Posterior cingulate gyrus (tissue), 11 donors: ENCODE measurements at regions of chr3 and their contacts with region 1.

Region 1: GRCh38 chr3:43690400-43691119 is at the start of gene ABHD5:
- DNase-seq: peak; percentile 77 to 98 (median 84)

Region 2: DNA sequence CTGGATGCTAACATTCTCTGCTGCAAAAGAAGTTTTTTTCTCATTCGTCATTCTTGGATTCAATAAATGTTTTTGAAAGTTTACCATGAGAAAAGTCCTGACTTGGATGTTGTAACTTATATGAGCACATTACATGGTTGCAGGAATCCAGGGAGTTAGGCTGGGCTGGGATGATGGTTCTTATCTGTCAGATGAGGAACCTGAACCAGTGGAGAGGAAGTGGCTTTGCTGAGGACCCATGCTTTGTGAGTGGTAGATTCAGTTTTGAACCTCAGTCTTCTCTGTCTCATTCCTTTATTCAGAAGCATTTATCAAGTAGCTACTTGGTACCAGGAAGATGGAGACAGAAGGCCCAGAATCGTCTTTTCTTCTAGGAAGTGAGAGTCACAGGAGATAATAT is 715.1 kb before region 1 on chr3:
- intact Hi-C with region 1: no loop called
- DNase-seq: no peak

Region 3: GRCh38 chr3:43432462-43432861 is 258.1 kb before region 1 on chr3:
- intact Hi-C with region 1: no loop called
- DNase-seq: no peak

Region 4: DNA sequence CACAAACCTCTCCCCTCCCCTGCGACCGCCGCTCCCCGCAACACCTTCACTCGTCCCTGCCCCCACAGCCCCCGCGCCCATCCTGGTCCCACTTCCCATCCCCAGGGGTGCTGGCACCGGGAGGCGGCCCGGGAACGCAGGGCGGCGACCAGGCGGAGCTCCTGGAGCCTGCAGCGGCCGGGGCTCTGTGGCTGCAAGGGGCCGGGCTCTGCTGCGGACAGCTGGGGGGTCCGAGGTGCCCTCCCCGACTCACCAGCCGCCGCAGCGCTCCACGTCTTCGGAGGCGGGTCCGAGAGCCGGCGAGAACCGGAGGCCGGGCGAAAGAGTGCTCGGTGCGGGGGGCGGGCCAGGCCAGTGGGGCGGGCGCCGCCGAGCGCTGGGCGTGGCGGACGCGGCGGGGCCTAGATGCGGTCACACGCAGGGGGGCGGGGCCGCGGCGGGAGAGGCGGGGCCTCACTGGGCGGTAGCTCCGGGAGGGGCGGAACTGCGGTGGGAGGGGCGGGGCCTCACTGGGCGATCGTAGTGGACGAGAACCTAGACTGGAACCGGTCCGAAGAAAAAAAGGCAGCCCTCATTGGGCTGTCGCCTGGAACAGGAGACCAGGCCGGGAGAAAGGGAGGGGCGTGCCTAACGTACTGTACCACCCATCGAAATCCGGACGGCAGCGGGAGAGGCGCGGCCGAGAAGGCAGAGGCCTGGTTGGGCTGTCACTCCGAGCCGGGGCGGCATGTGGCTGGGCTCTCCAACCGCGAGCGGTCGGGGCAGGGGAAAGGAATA is 68.7 kb before region 1 on chr3 and contains the start of gene ANO10:
- intact Hi-C with region 1: loop called (anchors 2 kb)
- DNase-seq: peak; percentile 96 to 100 (median 98)

Region 5: DNA sequence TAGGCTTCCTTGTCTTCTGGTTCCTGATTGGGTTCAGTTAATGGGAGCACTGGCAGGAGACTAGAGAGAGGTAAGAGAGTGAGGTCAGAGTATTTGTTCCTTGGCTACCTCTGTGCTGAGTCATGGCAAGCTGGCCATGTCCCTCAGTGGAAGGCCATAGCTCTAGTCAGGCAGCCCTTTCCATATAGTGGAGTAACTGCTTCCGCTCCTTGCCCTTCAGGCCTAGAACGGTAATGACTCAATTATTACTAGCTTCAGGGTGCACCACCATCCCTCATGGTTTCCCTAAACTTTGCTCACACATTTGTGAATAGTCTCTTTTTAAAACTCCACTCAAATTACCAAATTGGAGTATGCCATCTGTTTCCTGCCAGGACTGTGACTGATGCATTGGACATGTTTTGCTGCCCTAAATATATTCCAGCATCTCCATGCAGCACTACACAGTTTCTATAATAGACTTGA is 58.3 kb before region 1 on chr3:
- intact Hi-C with region 1: no loop called
- DNase-seq: no peak